Right ventricle myocardium superior (tissue), 1 donor: ENCODE measurements at regions of chr2 and their contacts with region 1.

Region 1: GRCh38 chr2:175366815-175367214 is 185.3 kb upstream of the ATP5MC3 start:
- DNase-seq: no peak
- ATAC-seq: peak; percentile 59

Region 2: GRCh38 chr2:175074478-175074877 is 292.3 kb before region 1 on chr2:
- intact Hi-C with region 1: no loop called
- DNase-seq: no peak
- ATAC-seq: no peak

Region 3: DNA sequence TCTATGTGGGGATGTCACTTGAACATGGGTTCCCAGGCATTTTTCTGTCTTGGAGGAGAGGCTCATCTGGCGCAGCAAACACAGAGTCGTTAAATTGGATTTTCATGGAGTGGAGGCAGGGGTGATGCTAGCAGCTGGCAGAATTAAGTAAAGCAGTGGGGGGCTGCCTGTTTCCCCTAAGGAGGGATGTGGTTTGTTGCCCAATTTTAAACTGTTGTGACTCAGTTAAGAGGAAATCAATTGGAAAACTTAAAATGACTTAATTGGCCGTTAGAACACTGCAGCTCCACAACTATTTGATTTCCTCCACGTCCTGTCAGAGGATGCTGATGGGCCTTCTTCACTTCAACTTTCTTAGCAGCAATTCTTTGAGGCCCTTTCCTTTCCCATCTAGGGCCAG is 168.8 kb after region 1 on chr2:
- intact Hi-C with region 1: no loop called
- DNase-seq: no peak
- ATAC-seq: no peak

Region 4: DNA sequence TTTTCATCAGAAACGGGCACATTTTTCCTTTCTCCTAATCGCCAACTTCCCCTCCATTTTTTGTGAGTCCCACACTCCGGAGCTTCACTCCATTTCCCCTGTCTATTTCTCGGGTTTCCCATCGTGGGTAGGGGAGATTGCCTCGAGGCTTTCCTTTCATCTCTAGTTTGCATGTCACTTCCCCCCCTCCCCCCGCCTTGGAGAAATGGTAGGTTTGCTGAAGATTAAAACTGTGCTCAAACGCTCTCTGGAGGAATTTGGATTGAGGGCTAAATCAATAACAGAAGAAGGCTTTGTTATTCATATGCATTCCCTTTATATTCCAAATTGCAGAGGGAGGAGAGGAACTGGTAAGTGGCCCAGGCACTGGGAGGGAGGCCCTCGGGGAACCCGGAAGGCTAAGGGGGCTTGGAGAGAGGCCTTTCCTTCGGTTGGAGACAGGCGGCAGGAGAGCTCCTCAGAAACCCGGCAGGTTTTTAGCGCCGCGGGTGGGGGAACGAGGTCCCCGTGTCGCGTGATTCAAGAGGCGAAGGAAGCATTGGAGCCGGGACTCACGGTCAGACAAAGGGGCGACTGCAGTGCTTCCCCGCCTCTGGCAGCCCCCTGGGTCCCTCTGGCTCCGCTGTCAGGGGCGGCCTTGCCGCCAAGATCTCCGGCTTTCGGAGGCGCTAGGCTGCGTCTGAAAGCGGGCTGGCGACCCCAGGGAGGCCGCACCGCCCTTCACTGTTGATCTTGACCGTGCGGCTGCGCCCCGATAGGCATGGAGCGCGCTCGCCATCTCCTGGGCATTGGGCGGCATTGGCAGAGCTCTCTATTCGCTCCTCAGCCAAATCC is 730.4 kb after region 1 on chr2:
- intact Hi-C with region 1: loop called (anchors 5 kb)
- DNase-seq: peak; percentile 72
- ATAC-seq: peak; percentile 94